ENCODE measurements at regions of chr15 and their contacts with region 1.

Region 1: GRCh38 chr15:42457445-42458442 is 33.2 kb downstream of the ZNF106 start:
- DNase-seq: peak; percentile 86
- ATAC-seq: peak; percentile 94
- H3K4me3 ChIP-seq: peak overlapping the region in 1 of 2 donors; percentile 28
- H3K27ac ChIP-seq: peak overlapping the region; percentile 69 to 76
- H3K4me1 ChIP-seq: peaks cover 0 to 4% of the 10 kb centered on the region in 2 donors
- H3K27me3 ChIP-seq: no peaks in the 10 kb centered on the region

Region 2: DNA sequence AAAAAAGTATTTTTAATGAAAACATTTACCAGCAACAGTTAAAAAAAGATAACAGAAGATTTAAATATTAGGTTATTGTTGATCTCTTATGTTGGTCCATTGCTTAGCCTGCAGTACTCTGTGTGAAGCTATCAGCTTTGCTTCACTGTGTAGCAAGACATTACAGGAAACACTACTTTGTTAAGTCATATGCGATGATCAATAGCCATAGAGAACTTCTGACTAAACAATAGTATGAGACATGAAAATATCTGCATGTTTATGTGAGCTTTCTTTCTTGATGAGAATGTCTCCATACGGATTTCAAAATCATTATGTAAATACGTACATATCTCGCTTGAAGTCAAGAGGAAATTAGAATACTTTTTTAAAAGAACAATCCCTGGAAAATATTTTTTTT is 125.4 kb before region 1 on chr15:
- intact Hi-C with region 1: no loop called
- DNase-seq: no peak
- ATAC-seq: no peak
- H3K4me3 ChIP-seq: no peak overlapping the region
- H3K27ac ChIP-seq: no peak overlapping the region
- H3K4me1 ChIP-seq: no peaks in the 10 kb centered on the region
- H3K27me3 ChIP-seq: no peaks in the 10 kb centered on the region

Region 3: GRCh38 chr15:42421376-42421775 is 36.4 kb before region 1 on chr15:
- intact Hi-C with region 1: loop called in 1 of 2 experiments (anchors 5 kb)
- DNase-seq: no peak
- ATAC-seq: peak; percentile 66
- H3K4me3 ChIP-seq: no peak overlapping the region
- H3K27ac ChIP-seq: peak overlapping the region; percentile 61 to 89
- H3K4me1 ChIP-seq: no peaks in the 10 kb centered on the region
- H3K27me3 ChIP-seq: no peaks in the 10 kb centered on the region